Activated CD4-positive, alpha-beta T cell treated with anti-CD3 and anti-CD28 coated beads for 36 hours (primary cell): ENCODE measurements at regions of chr13 and their contacts with region 1.

Region 1: DNA sequence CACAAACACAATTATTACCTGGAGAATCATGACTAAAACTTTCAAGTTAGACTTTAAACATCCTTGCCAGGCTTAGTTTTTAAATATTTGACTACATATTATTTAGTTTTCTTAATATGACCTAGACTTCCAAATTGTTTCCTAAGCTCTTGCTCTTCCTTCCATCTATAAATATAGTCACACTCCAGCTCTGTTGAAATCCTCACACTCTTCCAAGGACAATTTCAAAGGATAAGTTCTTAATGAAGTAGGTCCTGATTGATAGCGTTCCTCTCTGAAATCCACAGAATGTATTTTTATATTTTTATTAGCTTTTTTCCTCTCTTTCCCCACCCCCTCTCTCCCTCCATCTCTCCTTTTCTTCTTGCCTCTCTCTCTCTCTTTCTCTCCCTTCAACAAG is 1074.1 kb upstream of the PCDH20 start:
- DNase-seq: no peak
- ATAC-seq: no peak
- H3K4me3 Mint-ChIP-seq: no peak overlapping the region
- H3K27ac Mint-ChIP-seq: no peak overlapping the region
- H3K4me1 Mint-ChIP-seq: no peaks in the 10 kb centered on the region
- H3K27me3 Mint-ChIP-seq: no peaks in the 10 kb centered on the region

Region 2: DNA sequence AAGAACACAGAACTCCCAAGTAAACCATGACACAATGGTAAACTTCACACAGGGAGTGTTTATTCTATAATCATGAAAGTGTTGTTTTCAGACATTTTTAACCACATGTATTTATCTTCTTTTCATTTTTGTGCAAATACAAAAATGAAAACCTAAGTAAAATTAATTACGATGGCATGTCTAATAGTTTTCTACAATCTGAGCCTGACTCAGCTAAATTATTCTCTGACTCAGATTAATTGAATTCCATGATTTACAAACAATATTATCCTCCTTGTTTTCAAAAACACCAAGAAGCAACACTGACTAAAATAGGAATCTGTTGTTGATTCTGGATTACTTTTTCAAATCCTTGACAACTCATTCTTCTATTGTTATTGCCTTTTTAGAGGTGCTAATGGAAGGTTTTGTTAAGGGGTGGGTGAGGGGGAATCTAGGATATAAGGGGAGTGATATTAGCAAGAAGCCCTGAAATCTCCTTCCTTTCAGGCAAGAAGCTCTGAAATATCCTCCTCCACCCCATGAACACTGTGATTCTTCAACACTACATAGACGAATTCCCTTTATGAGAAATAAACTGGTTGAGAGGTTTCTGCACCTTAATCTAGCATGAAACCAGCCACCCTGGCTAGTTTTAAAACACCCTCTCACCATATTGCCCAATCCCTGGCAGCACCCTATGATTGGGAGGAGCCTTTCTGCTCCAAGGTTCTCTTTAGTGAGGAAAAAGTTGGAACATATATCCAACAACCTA is 16.4 kb before region 1 on chr13:
- CTCF ChIA-PET with region 1: no interaction called
- POLR2A ChIA-PET with region 1: no interaction called
- intact Hi-C with region 1: loop called in 1 of 2 experiments (anchors 1 kb)
- DNase-seq: no peak
- ATAC-seq: no peak
- H3K4me3 Mint-ChIP-seq: no peak overlapping the region
- H3K27ac Mint-ChIP-seq: no peak overlapping the region
- H3K4me1 Mint-ChIP-seq: no peaks in the 10 kb centered on the region
- H3K27me3 Mint-ChIP-seq: no peaks in the 10 kb centered on the region